ENCODE measurements at regions of chr1 and their contacts with region 1.

Region 1: DNA sequence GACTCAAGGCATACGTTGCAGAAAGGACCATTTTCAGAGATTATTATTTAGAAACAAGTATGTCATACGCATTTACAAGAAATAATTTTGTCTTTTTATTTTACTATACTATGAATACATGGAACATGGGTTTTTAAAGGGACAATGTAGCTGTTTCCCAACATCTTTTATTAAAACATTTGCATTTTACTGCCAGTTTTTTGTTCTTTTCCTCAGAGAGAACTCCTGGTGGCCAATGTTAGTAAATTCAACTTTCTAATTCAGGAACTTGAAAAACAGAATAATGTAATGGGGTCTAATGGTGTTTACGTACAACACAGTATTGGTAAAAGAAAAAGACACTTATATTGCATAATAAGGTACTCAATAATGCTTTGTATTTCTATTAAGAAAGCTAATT is 14.9 kb downstream of the PRDM2 start:
- DNase-seq: no peak
- CTCF ChIP-seq: no peak

Region 2: GRCh38 chr1:13687151-13687715 is 27.6 kb before region 1 on chr1:
- CTCF ChIA-PET with region 1: no interaction called
- POLR2A ChIA-PET with region 1: no interaction called
- DNase-seq: no peak
- CTCF ChIP-seq: no peak

Region 3: GRCh38 chr1:13699936-13700520 is 14.8 kb before region 1 on chr1 and contains the start of gene PRDM2:
- CTCF ChIA-PET with region 1: interaction called, 256 read pairs
- POLR2A ChIA-PET with region 1: interaction called, 3 read pairs
- DNase-seq: peak; percentile 76
- CTCF ChIP-seq: no peak

Measured in GM10248 (cell line).